HEK293T (cell line): ENCODE measurements at regions of chr4 and their contacts with region 1.

Region 1: DNA sequence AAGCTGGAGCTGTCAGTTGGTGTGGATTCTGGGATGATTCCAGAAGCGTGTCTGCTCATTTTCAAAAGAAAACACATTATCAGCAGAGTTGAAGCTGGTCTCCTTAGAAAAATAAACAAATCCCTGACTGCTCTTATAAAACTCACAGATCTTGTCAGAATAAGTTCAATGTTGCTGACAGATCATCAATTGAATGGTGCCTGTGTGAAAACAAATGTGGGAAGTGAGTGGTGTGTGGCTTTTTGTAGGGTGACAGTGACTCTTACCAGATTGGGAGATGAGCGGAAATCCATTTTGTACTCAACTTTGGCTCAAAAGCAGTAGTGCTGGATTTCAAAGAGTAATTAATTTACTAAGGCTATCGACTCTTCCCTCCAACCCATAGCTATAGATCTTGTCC is 807.8 kb downstream of the RAPGEF2 start:
- DNase-seq: no peak

Region 2: GRCh38 chr4:159463235-159463634 is 447.5 kb before region 1 on chr4:
- CTCF ChIA-PET with region 1: interaction called, 10 read pairs
- POLR2A ChIA-PET with region 1: no interaction called
- DNase-seq: no peak

Region 3: GRCh38 chr4:159655547-159655946 is 255.2 kb before region 1 on chr4:
- CTCF ChIA-PET with region 1: no interaction called
- POLR2A ChIA-PET with region 1: no interaction called
- DNase-seq: no peak

Region 4: DNA sequence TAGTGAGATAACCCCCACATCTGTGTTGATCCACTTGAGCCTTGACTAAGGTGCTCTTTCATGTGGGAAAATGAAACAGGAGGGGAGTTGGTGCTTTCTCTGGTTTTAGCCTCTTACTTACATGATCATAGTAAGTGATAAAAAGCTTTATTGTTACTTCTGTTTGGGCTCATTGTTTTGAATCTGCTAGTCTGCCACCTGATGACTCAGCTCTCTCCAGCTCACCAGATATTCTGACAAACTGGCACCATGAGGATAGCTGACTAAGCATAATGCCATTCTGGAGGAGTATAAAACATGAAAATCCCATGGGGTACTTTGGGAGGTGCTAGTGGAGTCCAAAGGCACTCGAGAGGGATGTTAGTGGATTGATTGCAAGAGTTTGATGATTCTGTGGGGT is 16.1 kb after region 1 on chr4:
- CTCF ChIA-PET with region 1: no interaction called
- POLR2A ChIA-PET with region 1: no interaction called
- DNase-seq: no peak